Upper lobe of right lung (tissue), 1 donor: ENCODE measurements at regions of chr9 and their contacts with region 1.

Region 1: DNA sequence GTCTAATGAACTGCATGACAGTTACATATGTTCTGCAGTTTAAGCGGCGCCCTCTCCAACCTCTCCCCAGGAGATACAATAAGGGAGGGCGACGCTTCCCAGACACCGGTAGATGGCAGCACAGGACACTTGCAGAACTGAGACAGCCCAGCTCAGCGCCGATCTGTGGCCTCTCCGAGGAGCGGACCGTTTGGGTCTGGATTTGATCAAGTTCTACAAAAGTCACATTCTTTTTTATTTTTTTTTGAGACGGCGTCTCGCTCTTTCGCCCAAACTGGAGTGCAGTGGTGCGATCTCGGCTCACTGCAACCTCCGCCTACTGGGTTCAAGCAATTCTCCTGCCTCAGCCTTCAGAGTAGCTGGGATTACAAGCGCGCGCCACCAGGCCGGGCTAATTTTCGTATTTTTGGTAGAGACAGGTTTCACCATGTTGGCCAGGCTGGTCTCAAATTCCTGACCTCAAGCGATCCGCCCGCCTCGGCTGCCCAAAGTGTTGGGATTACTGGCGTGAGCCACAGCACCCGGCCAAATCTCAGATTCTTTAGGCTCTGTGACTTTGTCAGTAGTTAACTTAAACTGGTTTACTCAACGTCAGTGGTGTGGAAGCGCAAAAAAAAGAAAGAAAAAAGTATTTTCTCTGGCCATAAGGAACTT is 1.4 kb upstream of the ATOSB start:
- DNase-seq: peak; percentile 92
- ATAC-seq: peak; percentile 78
- H3K4me3 ChIP-seq: peak overlapping the region; percentile 71
- H3K27ac ChIP-seq: peak overlapping the region; percentile 89
- H3K4me1 ChIP-seq: peaks cover 42% of the 10 kb centered on the region
- H3K27me3 ChIP-seq: no peaks in the 10 kb centered on the region
- CTCF ChIP-seq: peak; percentile 91

Region 2: GRCh38 chr9:35211854-35212253 is 94.8 kb after region 1 on chr9:
- intact Hi-C with region 1: no loop called
- DNase-seq: no peak
- ATAC-seq: no peak
- H3K4me3 ChIP-seq: no peak overlapping the region
- H3K27ac ChIP-seq: no peak overlapping the region
- H3K4me1 ChIP-seq: no peaks in the 10 kb centered on the region
- H3K27me3 ChIP-seq: no peaks in the 10 kb centered on the region
- CTCF ChIP-seq: no peak

Region 3: DNA sequence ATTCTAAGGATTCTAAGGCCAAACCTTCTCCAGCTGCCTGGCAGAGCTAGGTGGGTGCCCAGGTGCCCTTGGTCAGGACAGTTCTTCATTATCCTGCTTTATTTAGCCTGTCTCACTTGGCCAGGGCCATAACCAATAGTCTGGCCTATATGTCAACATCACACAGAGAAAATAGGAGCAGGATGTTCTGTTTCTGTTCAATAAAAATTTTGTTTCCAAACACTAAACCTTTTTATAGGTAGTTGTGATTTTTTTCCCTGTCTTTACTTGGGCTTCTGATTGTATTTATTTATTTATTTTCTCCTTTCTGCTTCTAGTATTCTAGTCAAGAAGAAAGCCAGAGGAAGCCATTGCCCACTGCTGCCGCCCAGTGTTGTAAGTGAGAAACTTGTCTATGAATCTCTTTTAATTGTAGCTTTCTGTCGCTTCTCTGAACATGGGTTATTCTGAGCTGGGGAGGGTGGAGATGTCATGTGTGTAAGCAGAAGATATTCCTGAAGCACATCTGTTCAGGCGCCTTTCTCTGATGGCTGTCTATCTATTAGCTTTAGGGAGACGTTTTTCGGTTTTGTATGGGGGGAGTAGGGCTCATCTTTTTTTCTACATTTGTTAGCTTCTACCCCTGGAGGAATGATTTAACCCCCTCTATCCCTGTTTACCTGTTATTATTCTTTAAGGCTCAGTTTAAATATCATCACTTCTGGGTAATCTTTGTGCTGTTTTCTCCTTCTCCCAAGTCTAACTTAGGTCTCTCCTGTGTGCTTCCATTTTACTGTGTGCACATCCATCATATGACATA is 141.8 kb after region 1 on chr9:
- intact Hi-C with region 1: loop called (anchors 5 kb)
- DNase-seq: peak; percentile 77
- ATAC-seq: peak; percentile 88
- H3K4me3 ChIP-seq: peak overlapping the region; percentile 2
- H3K27ac ChIP-seq: no peak overlapping the region
- H3K4me1 ChIP-seq: no peaks in the 10 kb centered on the region
- H3K27me3 ChIP-seq: no peaks in the 10 kb centered on the region
- CTCF ChIP-seq: peak; percentile 77